Activated naive CD4-positive, alpha-beta T cell treated with anti-CD3 and anti-CD28 coated beads for 36 hours (primary cell): ENCODE measurements at regions of chr12 and their contacts with region 1.

Region 1: DNA sequence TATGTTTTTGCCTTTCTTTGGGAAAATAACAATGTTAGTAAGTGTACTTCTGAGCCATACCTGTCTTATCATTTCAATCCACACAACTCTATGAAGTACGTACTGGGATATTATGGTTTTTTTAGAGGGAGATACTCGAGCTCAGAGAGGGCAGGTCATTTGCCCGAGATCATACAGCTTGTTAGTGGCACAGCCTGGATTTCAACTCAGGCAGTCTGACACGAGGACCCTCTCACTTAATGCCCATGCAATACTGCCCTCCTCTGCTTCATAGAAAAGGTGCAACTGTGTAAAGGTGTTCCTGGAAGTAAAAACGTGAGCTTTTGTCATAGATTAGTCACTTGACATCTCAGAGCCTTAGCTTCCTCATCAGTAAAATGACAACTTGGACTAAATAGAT is 128.0 kb downstream of the NDUFA12 start:
- DNase-seq: peak; percentile 40
- H3K4me3 Mint-ChIP-seq: no peak overlapping the region
- H3K27ac Mint-ChIP-seq: no peak overlapping the region
- H3K4me1 Mint-ChIP-seq: peaks cover 21% of the 10 kb centered on the region
- H3K27me3 Mint-ChIP-seq: peaks cover 58% of the 10 kb centered on the region

Region 2: DNA sequence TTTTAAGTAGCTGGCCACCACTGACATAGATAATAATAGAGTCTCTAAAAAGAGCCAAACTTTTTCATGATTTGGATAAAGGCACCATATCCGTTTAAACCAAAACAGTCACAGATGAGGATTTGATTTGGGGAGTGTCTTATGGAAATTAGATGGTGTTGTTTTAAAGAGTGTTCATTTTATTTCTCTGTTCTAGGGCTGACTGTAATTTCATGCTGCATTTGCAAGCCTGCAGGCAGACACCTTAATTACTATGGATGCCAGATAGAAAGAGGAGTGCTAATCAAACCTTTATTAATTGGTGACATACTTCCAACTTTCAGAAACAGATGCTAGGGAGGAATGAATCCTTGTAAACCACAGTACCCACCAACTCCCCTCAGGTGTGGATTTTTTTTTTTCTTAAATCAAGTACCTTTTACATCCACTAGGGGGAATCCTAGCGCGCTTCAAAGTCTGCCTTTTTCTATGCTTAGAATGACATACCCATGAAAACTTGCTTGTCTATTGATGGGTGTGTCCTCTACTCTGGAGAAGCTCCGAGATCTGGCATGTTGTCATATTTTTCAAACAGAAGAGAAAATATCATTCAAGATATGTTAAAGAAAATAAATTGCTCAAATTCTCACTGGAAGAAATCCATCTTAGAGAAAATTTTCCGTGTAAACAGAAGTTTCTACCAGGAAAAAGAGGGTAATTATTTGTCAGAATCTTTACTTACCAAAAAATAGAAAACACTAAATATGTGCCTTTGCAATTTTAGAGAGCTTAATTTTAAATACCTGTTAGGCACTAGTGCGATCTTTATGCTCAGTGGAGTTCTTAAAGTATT is 741.3 kb before region 1 on chr12:
- CTCF ChIA-PET with region 1: no interaction called
- intact Hi-C with region 1: loop called (anchors 5 kb)
- DNase-seq: peak; percentile 53
- H3K4me3 Mint-ChIP-seq: no peak overlapping the region
- H3K27ac Mint-ChIP-seq: no peak overlapping the region
- H3K4me1 Mint-ChIP-seq: peaks cover 4% of the 10 kb centered on the region
- H3K27me3 Mint-ChIP-seq: no peaks in the 10 kb centered on the region

Region 3: DNA sequence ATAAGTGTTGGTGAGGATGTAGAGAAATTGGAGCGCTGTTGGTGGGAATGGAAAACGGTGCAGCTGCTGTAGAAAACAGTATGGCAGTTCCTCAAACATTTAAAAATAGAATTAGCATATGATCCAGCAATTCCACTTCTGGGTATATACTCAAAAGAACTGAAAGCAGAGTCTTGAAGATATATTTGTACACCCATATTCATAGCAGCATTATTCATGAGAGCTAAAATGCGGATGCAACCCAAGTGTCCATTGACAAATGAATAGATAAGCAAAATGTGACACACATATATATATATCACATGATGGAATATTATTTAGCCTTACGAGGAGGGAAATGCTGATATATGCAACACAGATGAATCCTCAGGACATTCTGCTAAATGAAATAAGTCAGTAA is 331.2 kb before region 1 on chr12:
- CTCF ChIA-PET with region 1: interaction called, 3 read pairs
- intact Hi-C with region 1: loop called (anchors 5 kb)
- DNase-seq: no peak
- H3K4me3 Mint-ChIP-seq: no peak overlapping the region
- H3K27ac Mint-ChIP-seq: no peak overlapping the region
- H3K4me1 Mint-ChIP-seq: no peaks in the 10 kb centered on the region
- H3K27me3 Mint-ChIP-seq: no peaks in the 10 kb centered on the region

Region 4: GRCh38 chr12:94710933-94711332 is 164.6 kb before region 1 on chr12:
- CTCF ChIA-PET with region 1: interaction called, 4 read pairs
- intact Hi-C with region 1: loop called (anchors 1 kb)
- DNase-seq: peak; percentile 57
- H3K4me3 Mint-ChIP-seq: no peak overlapping the region
- H3K27ac Mint-ChIP-seq: no peak overlapping the region
- H3K4me1 Mint-ChIP-seq: peaks cover 4% of the 10 kb centered on the region
- H3K27me3 Mint-ChIP-seq: no peaks in the 10 kb centered on the region

Region 5: GRCh38 chr12:94817695-94818075 is 57.8 kb before region 1 on chr12:
- CTCF ChIA-PET with region 1: interaction called, 7 read pairs
- intact Hi-C with region 1: loop called (anchors 2 kb)
- DNase-seq: no peak
- H3K4me3 Mint-ChIP-seq: no peak overlapping the region
- H3K27ac Mint-ChIP-seq: no peak overlapping the region
- H3K4me1 Mint-ChIP-seq: no peaks in the 10 kb centered on the region
- H3K27me3 Mint-ChIP-seq: peaks cover 4% of the 10 kb centered on the region

Region 6: GRCh38 chr12:94990222-94990621 is 114.7 kb after region 1 on chr12:
- CTCF ChIA-PET with region 1: no interaction called
- intact Hi-C with region 1: no loop called
- DNase-seq: peak; percentile 33
- H3K4me3 Mint-ChIP-seq: no peak overlapping the region
- H3K27ac Mint-ChIP-seq: peak overlapping the region; percentile 47
- H3K4me1 Mint-ChIP-seq: peaks cover 49% of the 10 kb centered on the region
- H3K27me3 Mint-ChIP-seq: no peaks in the 10 kb centered on the region